Left cardiac atrium (tissue), 4 donors: ENCODE measurements at regions of chr15 and their contacts with region 1.

Region 1: DNA sequence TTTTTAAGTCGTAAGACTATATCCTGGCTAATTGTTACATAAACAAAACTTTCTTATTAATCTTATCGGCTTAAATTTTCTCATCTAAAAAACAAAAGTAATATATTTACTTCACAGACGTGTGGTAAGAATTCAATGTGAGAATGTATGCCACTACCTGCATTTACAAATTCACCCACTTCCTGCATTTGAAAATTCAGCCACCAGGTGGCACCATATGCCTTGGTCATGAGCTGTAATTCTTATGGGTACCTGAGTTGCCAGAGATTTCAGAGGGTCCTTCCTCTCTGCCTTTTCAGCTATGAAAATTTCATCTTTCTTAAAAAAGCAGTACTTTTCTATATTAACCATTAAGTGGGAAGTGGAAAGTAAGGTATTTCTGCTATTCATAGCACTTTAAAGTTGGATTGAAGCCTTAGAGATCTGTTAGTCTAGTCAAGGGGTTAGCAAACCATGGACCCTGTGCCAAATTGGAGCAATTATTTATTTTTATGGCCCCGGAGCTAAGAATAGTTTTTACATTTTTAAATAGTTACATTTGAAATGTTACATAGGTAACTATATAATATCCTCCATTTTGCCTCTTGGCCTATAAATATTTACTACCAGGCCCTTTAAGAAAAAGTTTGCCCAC is 127.8 kb downstream of the HCN4 start:
- DNase-seq: peak; percentile 56
- ATAC-seq: peak in 1 of 2 donors; percentile 47

Region 2: DNA sequence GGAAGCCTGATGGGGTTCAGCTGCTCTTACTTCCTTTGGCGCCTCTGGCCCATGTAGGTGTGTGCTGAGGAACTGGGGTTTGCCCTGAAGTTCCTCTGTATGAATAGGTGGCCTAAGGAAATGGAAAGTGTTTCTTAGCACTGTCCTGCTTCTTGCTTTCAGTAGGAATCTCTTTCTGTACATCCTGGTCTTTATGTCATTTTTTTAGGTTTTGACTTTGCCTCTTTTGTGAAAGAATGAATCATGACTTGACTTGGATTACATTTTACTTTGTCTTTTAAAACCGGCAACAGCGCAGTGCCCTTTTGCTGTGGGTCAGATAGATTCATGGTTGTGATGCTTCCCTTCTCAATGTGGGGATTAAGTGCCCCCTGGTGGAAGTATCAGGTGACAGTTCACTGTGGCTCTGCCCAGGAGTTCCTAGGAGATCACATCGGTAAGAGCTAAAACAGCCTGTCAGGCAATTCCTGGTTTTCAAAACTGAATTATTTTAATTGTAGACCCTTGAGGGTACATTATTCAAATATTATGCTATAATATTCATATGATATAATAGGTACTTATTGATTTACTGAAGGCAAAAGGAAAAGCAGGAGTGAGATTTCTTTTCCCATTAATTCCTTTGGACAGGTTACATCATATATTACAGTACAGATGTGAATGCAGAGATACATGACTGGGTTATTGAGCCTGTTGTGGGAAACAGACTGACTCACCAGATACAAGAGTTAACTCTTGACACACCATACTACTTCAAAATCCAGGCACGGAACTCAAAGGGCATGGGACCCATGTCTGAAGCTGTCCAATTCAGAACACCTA is 32.4 kb after region 1 on chr15:
- intact Hi-C with region 1: loop called (anchors 2 kb)
- DNase-seq: peak; percentile 33
- ATAC-seq: peak; percentile 72 to 89

Region 3: DNA sequence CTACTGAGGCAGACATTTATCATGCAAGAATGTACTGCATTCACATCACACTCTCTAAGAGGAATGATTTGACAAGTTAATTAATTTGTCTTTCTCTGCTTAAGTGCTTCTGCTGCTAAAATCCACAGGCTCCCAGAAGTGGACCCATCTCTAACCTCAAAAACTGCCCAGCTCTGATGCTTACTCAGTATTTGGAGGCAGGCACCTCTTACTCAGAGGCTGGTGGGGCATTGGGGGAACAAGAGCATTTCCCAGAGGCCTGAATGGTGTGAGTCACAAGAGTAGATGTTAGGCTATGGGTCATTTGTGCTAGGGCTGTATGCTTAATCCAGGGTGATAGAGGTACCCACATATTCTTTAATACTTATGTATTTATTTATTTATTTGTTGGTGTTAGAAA is 162.2 kb after region 1 on chr15:
- intact Hi-C with region 1: no loop called
- DNase-seq: no peak
- ATAC-seq: no peak